ENCODE measurements at regions of chr2 and their contacts with region 1.

Region 1: DNA sequence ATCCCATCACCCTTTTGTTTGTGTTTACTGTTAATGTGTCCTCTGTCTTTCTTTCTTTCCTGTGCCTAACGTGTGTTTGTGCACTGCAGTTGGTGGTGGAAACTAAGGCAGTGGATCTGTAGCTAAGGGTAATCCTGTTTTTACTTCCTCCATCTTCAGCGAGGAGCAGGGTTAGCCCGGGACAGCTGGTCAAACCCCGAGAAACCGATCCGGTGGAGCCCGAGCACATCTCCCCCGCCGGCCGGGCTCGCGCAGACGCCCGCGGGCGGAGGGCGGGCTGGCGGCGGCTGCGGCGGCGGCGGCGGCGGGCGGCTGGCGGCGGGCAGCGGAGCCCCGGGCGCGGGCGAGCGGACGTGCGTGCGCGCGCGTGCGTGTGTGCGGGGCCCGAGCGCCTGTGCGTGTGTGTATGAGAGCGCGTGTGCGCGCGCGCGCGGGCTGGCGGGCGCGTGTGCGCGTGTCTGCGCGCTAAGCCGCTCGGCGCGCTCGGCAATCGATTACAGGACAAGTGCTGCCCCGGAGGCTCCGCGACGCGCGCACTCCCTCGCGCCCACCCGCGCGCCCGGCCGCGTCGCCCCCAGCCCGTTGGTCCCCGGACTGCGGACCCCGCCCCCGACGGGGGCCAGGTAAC is at the start of gene IKZF2:
- DNase-seq: peak; percentile 79
- ATAC-seq: peak; percentile 45
- H3K4me3 ChIP-seq: peak within 1 kb of the TSS; percentile 85
- H3K27ac ChIP-seq: peak within 1 kb of the TSS; percentile 92
- H3K4me1 ChIP-seq: peaks cover 4% of the 10 kb centered on the region
- H3K27me3 ChIP-seq: no peaks in the 10 kb centered on the region
- CTCF ChIP-seq: no peak
- EP300 ChIP-seq: peak in 1 of 2 experiments; percentile 19; a peak in 1 of 4 replicates
- POLR2A ChIP-seq: peak; percentile 88
- RAD21 ChIP-seq: no peak
- polyA plus RNA-seq, gene IKZF2: 15.2 to 22.5 TPM

Region 2: DNA sequence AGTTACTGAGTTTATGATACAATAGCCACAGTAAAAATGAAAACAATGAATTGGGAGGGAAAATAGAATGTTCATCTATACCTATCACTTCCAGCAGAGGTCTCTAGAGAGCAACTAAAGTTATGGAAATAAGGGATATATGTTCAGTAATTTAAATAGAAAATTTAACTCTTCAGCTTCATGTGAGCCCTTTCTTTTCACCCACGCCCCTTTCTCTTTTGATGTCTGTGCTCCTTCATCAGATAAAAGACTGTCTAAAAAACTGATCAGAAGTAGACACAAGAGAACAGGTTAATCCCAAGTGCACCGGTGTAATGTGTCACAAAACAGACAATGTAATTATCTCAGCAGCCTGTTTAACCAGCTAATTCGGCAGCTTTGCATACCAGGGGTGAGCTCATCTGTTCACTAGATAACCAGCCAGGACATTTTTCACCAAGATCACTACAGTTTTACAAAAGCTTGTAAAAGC is 374.5 kb before region 1 on chr2:
- CTCF ChIA-PET with region 1: interaction called, 105 read pairs
- POLR2A ChIA-PET with region 1: interaction called, 9 read pairs
- RAD21 ChIA-PET with region 1: interaction called, 45 read pairs
- SMC1A ChIA-PET with region 1: interaction called, 118 read pairs
- in situ Hi-C with region 1: loop called (anchors 10 kb)
- intact Hi-C with region 1: loop called (anchors 1 kb)
- DNase-seq: peak; percentile 17
- ATAC-seq: peak; percentile 74
- H3K4me3 ChIP-seq: no peak overlapping the region
- H3K27ac ChIP-seq: no peak overlapping the region
- H3K4me1 ChIP-seq: no peaks in the 10 kb centered on the region
- H3K27me3 ChIP-seq: no peaks in the 10 kb centered on the region
- CTCF ChIP-seq: peak; percentile 47 to 63 (median 53)
- EP300 ChIP-seq: no peak
- POLR2A ChIP-seq: no peak
- RAD21 ChIP-seq: peak; percentile 69

Region 3: DNA sequence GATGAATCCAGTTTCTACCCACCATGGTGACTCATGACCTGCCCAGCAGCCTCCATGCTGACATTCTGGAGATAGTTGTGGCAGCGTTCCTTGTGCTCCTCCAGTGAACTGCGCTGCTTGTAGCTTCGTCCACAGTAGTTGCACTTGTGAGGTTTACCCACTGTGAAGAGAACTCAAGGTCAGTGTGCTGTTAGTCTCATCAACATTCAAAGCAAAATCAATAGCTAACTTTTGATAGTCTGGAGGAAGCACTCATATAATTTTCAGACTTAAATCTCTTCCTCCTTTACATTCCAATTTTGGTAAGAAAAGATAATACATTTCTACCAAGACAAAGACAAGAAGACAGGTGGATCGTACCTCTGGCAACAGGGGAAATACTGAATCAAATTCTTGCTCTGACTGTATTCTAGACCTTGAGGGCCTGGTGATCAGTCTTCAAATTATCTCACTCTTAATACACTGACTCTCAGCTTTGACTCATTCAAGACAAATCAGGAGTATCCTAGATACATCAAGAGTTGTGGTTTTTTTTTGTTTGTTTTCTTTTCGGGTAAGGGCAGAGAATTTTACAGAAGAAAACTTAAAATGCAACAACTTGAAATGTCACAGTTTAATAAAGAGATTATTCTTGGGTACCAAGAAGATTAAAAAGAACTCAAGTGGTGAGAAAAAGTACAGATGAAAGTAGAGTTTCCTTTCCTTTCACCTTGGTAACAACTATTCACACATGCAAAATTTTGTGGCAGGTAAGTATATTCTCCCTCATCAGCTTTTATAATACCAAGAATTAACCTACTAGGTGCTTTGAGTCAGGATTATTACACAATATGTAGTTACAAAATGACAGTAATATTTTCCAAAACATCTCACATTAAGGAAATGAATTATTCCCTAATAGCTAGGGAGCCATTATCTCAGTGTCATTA is 129.3 kb before region 1 on chr2:
- CTCF ChIA-PET with region 1: interaction called, 88 read pairs
- POLR2A ChIA-PET with region 1: interaction called, 183 read pairs
- RAD21 ChIA-PET with region 1: interaction called, 386 read pairs
- SMC1A ChIA-PET with region 1: interaction called, 430 read pairs
- in situ Hi-C with region 1: loop called (anchors 5 kb)
- intact Hi-C with region 1: loop called (anchors 1 kb)
- DNase-seq: peak; percentile 87
- ATAC-seq: peak; percentile 78
- H3K4me3 ChIP-seq: peak overlapping the region; percentile 76
- H3K27ac ChIP-seq: peak overlapping the region; percentile 96
- H3K4me1 ChIP-seq: peaks cover 14% of the 10 kb centered on the region; the same call in 1 of the 2 replicates
- H3K27me3 ChIP-seq: no peaks in the 10 kb centered on the region
- CTCF ChIP-seq: no peak
- EP300 ChIP-seq: peak; percentile 80 to 87
- POLR2A ChIP-seq: peak; percentile 88
- RAD21 ChIP-seq: peak; percentile 27; the same call in 1 of the 2 replicates

Region 4: GRCh38 chr2:213119061-213119856 is 32.3 kb before region 1 on chr2:
- CTCF ChIA-PET with region 1: interaction called, 19 read pairs
- POLR2A ChIA-PET with region 1: interaction called, 3 read pairs
- RAD21 ChIA-PET with region 1: interaction called, 9 read pairs
- SMC1A ChIA-PET with region 1: interaction called, 56 read pairs
- in situ Hi-C with region 1: no loop called
- intact Hi-C with region 1: no loop called
- DNase-seq: peak; percentile 59
- ATAC-seq: peak; percentile 76
- H3K4me3 ChIP-seq: peak overlapping the region; percentile 53
- H3K27ac ChIP-seq: peak overlapping the region; percentile 79
- H3K4me1 ChIP-seq: peaks cover 23% of the 10 kb centered on the region
- H3K27me3 ChIP-seq: no peaks in the 10 kb centered on the region
- CTCF ChIP-seq: no peak
- EP300 ChIP-seq: no peak
- POLR2A ChIP-seq: no peak
- RAD21 ChIP-seq: 0 out of 2 replicates have a peak, but pooled peaks have one; percentile 5

Region 5: GRCh38 chr2:213166109-213166508 is 14.6 kb after region 1 on chr2:
- CTCF ChIA-PET with region 1: interaction called, 16 read pairs
- POLR2A ChIA-PET with region 1: interaction called, 36 read pairs
- RAD21 ChIA-PET with region 1: interaction called, 50 read pairs
- SMC1A ChIA-PET with region 1: interaction called, 97 read pairs
- in situ Hi-C with region 1: no loop called
- intact Hi-C with region 1: no loop called
- DNase-seq: no peak
- ATAC-seq: peak; percentile 93
- H3K4me3 ChIP-seq: no peak overlapping the region
- H3K27ac ChIP-seq: peak overlapping the region; percentile 76
- H3K4me1 ChIP-seq: peaks cover 35% of the 10 kb centered on the region
- H3K27me3 ChIP-seq: no peaks in the 10 kb centered on the region
- CTCF ChIP-seq: no peak
- EP300 ChIP-seq: peak in 1 of 2 experiments; percentile 19; a peak in 2 of 4 replicates
- POLR2A ChIP-seq: no peak
- RAD21 ChIP-seq: no peak

Region 6: GRCh38 chr2:213227458-213227857 is 75.9 kb after region 1 on chr2:
- CTCF ChIA-PET with region 1: interaction called, 19 read pairs
- POLR2A ChIA-PET with region 1: interaction called, 232 read pairs
- RAD21 ChIA-PET with region 1: interaction called, 540 read pairs
- SMC1A ChIA-PET with region 1: interaction called, 467 read pairs
- in situ Hi-C with region 1: no loop called
- intact Hi-C with region 1: no loop called
- DNase-seq: peak; percentile 88
- ATAC-seq: peak; percentile 82
- H3K4me3 ChIP-seq: no peak overlapping the region
- H3K27ac ChIP-seq: peak overlapping the region; percentile 92
- H3K4me1 ChIP-seq: peaks cover 49% of the 10 kb centered on the region
- H3K27me3 ChIP-seq: no peaks in the 10 kb centered on the region
- CTCF ChIP-seq: no peak
- EP300 ChIP-seq: no peak; a peak in 3 of 4 replicates
- POLR2A ChIP-seq: no peak
- RAD21 ChIP-seq: peak; percentile 30; the same call in 1 of the 2 replicates

Region 7: GRCh38 chr2:213251618-213252017 is 100.1 kb after region 1 on chr2:
- CTCF ChIA-PET with region 1: interaction called, 3 read pairs
- POLR2A ChIA-PET with region 1: no interaction called
- RAD21 ChIA-PET with region 1: interaction called, 540 read pairs
- SMC1A ChIA-PET with region 1: interaction called, 467 read pairs
- in situ Hi-C with region 1: no loop called
- intact Hi-C with region 1: no loop called
- DNase-seq: no peak
- ATAC-seq: peak; percentile 87
- H3K4me3 ChIP-seq: no peak overlapping the region
- H3K27ac ChIP-seq: no peak overlapping the region
- H3K4me1 ChIP-seq: peaks cover 6% of the 10 kb centered on the region; the same call in 1 of the 2 replicates
- H3K27me3 ChIP-seq: no peaks in the 10 kb centered on the region
- CTCF ChIP-seq: peak; percentile 38 to 73 (median 47); a peak in 5 of 6 replicates
- EP300 ChIP-seq: no peak
- POLR2A ChIP-seq: no peak
- RAD21 ChIP-seq: peak; percentile 90

Measured in GM12878 (cell line).